HEK293 (cell line): ENCODE measurements at regions of chr17 and their contacts with region 1.

Region 1: DNA sequence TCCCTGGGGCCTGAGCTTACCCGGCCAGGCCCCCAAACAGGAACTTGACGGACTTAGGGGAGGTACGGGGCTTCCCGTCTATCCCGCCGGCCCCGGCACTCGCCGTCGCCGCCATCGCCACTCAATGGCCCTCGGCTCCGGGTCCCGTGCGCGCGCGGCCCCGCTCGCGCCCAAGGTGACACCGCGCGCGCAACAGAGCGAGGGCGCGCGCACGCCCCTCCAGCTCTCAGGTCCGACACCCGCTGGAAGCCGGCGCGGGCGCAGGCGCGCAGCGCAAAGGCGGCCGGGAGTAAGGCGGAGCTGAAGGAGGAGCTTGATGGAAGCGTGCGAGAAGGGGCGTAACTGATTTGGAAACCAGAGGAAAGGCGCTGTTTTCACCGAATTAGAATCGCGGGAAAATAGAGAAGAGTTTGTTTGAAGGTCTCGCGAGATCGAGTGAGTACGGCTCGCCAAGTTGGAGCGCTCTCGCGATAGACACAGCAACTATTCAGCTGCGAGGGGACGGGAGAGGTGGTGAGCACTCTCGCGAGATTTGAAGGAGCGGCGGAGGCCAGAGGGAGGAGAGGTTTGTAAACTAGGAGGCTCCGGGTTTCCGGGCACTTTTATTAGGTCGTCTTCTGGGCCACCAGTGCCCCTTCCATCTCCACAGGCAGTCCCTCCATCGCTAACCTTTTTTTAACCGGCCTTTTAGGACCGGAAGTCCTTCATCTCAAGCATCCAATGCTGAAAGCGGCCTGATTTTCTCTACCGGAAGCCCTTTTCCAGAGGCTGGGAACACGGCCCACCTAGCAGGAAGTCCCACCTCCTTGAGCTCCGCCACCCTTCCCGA is at the starts of genes RNF167 and SLC25A11:
- H3K4me3 ChIP-seq: peak within 1 kb of the TSS; percentile 87
- H3K27ac ChIP-seq: peak within 1 kb of the TSS; percentile 93
- H3K4me1 ChIP-seq: peaks cover 9% of the 10 kb centered on the region
- CTCF ChIP-seq: no peak

Region 2: DNA sequence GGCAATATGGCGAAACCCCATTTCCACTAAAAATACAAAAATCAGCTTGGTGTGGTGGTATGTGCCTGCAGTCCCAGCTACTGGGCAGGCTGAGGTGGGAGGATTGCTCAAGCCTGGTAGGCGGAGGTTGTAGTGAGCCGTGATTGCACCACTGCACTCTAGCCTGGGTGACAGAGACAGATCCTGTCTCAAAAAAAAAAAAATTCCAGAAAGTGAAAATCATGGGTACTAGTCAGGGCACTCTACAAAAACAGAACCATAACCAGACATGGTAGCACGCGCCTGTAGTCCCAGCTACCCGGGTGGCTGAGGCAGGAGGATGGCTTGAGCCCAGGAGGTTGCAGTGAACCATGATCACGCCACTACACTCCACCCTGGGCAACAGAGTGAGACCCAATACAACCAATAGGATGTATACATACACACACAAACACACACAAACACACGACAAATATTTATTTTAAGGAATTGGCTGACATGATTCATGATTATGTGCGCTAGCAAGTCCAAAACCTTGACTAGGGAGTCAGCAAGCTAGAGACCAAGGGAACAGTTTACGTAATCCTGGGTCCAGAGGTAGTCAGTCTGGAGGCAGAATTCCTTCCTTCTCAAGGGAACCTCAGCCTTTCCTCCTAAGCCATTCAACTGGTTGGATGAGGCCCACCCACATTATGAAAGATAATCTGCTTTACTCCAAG is 19.5 kb before region 1 on chr17:
- CTCF ChIA-PET with region 1: interaction called, 6 read pairs
- POLR2A ChIA-PET with region 1: interaction called, 20 read pairs
- H3K4me3 ChIP-seq: no peak overlapping the region
- H3K27ac ChIP-seq: no peak overlapping the region
- H3K4me1 ChIP-seq: no peaks in the 10 kb centered on the region
- CTCF ChIP-seq: no peak

Region 3: GRCh38 chr17:4928881-4929280 is 11.1 kb before region 1 on chr17:
- CTCF ChIA-PET with region 1: interaction called, 6 read pairs
- POLR2A ChIA-PET with region 1: interaction called, 20 read pairs
- H3K4me3 ChIP-seq: no peak overlapping the region
- H3K27ac ChIP-seq: no peak overlapping the region
- H3K4me1 ChIP-seq: no peaks in the 10 kb centered on the region; the same call in 1 of the 2 replicates
- CTCF ChIP-seq: no peak

Region 4: DNA sequence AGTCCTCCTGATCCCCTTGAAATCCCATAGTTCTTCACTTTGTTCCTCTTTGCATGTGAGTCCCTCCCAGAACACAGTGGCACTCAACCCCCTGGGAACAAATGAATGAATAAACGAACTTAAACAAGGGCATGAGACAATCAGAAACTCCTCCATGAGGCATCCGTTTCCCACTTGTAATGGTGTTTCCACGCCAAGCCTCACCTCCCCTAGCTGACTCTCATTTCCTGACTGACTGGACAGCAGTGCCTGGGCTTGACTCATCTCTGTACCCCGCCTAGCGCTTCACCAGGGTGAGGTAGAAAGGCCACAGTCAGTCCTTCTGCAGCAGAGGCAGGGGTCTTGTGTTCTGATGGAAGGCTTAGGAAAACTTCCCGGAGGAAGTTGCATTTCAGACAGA is 71.9 kb after region 1 on chr17:
- CTCF ChIA-PET with region 1: no interaction called
- POLR2A ChIA-PET with region 1: no interaction called
- H3K4me3 ChIP-seq: no peak overlapping the region
- H3K27ac ChIP-seq: no peak overlapping the region
- H3K4me1 ChIP-seq: no peaks in the 10 kb centered on the region
- CTCF ChIP-seq: no peak

Region 5: GRCh38 chr17:5135726-5136579 is 195.9 kb after region 1 on chr17:
- CTCF ChIA-PET with region 1: no interaction called
- POLR2A ChIA-PET with region 1: no interaction called
- H3K4me3 ChIP-seq: no peak overlapping the region
- H3K27ac ChIP-seq: no peak overlapping the region
- H3K4me1 ChIP-seq: no peaks in the 10 kb centered on the region
- CTCF ChIP-seq: no peak